GM10248 (cell line): ENCODE measurements at regions of chr5 and their contacts with region 1.

Region 1: GRCh38 chr5:151917904-151918303 is 6.7 kb downstream of the GLRA1 start:
- DNase-seq: no peak
- CTCF ChIP-seq: no peak

Region 2: GRCh38 chr5:151903243-151903653 is 14.7 kb before region 1 on chr5:
- CTCF ChIA-PET with region 1: interaction called, 24 read pairs
- POLR2A ChIA-PET with region 1: no interaction called
- DNase-seq: peak; percentile 40
- CTCF ChIP-seq: no peak